Posterior vena cava (tissue), 2 donors: ENCODE measurements at regions of chr14 and their contacts with region 1.

Region 1: DNA sequence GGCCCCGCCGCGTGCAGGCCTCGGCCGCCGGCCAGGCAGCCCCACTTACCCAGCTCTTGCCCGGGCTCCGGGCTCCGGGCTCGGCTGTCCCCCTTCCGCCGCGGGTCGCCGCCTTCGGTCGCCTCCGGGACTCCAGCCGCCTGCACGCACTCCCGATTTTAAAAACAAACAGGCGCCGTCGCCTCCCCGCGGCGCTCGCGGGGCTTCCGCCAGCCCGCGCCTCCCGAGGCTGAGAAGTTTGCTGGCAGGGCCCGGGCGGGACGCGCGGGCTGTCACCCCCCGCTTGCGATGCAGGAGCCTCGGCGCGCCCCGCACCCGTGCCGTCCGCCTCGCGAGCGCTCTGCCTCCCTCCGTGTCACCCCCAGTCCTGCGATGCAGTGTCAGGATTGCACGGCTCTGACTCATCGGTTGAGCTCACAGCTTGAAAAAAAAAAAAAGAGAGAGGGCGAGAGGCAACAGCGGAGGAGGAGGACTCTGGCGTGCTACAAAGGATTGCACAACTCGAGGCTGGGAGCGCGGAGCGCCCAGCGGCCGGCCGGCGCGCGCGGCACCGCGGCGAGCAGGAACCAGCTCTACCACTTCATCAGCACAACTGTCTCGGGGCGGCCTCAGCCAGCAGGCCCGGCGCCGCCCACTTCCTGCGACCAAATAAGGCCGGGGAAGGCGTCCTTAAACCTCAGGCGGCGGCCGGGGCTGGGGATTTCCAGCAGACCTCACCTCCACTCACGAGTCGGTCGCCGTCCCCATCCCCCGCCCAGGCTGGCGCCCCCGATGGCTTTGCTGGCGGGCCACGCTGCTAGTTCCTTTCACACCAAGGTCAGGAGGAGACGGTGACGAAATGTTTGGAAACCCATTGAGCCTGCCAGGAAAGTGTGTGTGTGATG is 45.8 kb upstream of the PNMA1 start:
- DNase-seq: peak; percentile 99

Region 2: GRCh38 chr14:73640796-73641365 is 119.1 kb before region 1 on chr14:
- intact Hi-C with region 1: no loop called
- DNase-seq: no peak

Region 3: GRCh38 chr14:73712540-73713171 is 47.3 kb before region 1 on chr14:
- intact Hi-C with region 1: no loop called
- DNase-seq: no peak

Region 4: GRCh38 chr14:73785873-73786695 is 26.1 kb after region 1 on chr14:
- intact Hi-C with region 1: loop called in 1 of 2 experiments (anchors 2 kb)
- DNase-seq: peak; percentile 93

Region 5: GRCh38 chr14:74048281-74048680 is 288.3 kb after region 1 on chr14:
- intact Hi-C with region 1: no loop called
- DNase-seq: no peak

Region 6: DNA sequence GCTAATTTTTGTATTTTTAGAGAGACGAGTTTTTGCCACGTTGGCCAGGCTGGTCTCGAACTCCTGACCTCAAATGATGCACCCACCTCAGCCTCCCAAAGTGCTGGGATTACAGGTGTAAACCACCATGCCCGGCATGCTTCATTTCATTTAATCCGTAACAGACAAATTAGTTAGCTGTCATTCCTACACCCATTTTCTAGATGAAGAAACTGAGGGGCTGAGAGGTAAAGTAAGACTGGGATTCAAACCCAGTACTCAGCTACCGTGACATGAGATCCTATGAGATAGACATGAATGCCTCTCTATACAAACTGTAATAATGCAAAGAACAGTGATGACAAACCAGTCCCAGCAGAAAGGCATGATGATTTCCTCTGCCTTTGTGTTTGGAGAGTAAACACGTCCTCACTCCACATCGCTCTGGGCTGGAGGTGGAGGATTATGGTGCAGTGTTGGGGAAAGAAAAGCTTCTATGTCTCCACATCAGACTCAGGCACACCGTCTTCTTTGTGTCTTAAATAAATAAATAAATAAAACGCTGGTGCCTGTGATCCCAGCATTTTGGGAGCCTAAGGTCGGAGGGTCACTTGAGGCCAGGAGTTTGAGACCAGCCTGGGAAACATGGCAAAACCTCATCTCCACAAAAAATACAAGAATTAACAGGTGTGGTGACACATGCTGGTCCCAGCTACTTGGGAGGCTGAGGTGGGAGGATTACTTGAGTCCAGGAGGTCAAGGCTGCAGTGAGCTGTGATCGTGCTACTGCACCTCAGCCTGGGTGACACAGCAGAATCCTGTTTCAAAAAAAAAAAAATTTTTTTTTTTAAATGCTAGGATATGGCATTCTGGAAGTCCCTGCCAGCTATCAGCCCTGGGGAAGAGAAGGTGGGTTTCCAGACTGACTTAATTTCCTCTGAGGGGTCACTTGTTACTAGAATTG is 489.7 kb after region 1 on chr14:
- intact Hi-C with region 1: loop called in 1 of 2 experiments (anchors 5 kb)
- DNase-seq: no peak